ENCODE measurements at regions of chr11 and their contacts with region 1.

Region 1: DNA sequence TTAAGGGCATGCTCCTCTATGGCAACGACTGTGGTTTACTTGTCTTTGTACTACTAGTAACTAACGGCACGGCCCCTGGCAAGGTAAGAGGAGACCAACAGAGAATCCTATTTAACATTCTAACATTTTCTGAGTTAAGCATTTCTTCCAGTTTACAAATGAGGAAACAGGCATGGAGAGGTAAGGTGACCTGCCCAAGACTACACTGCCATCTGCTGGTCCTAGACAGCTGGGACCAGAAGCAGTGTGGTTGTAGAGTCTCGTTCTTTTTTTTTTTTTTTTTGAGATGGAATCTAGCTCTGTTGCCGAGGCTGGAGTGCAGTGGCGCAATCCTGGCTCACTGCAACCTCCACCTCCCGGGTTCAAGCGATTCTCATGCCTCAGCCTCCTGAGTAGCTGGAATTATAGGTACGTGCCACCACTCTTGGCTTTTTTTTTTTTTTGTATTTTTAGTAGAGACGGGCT is 5.3 kb upstream of the RAPSN start:
- DNase-seq: peak; percentile 85
- H3K4me3 Mint-ChIP-seq: no peak overlapping the region
- H3K27ac Mint-ChIP-seq: no peak overlapping the region
- H3K4me1 Mint-ChIP-seq: no peaks in the 10 kb centered on the region
- H3K27me3 Mint-ChIP-seq: no peaks in the 10 kb centered on the region
- CTCF ChIP-seq: peak; percentile 74

Region 2: DNA sequence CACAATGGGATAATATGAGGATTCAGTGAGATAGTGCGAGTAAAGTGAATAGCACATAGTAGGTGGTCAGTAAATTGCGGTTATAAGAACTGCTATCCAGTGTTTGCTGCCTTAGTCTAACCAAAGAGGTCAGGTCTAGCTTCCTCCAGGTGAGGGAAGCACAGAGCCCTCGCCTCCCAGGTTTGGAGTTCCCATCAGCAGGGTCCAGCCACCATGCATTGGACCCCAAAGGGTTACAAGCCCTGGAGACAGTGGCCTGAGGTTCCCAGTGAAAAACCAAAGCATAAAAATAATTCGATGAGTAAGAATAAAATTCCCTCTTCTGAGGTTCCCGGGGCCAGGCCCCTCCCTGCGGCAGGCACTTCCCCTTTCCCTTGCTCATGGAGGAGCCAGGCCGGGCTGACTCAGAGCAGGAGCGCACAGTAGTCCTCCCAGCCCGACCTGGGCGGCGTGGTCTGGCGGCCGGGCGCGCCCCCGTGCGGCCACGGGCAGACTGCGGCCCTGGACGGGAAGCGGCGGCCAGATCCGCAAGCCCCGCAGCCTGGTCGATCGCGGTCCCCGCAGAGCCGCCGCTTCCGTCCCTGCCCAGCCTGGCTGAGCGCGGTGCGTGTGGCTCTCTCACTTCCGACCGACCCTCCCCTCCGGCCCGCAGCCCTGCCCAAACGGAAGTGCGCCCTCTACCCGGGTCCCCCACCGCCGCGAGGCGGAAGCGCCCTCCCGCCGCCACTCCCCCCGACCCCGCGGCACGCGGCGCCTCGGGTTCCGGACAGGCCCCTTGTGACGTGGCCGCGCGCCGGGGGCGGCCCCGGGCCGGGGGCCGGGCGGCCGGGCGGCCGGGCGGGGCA is 46.2 kb before region 1 on chr11 and contains the start of gene SLC39A13:
- CTCF ChIA-PET with region 1: interaction called, 6 read pairs
- POLR2A ChIA-PET with region 1: interaction called, 6 read pairs
- intact Hi-C with region 1: loop called (anchors 2 kb)
- DNase-seq: peak; percentile 91
- H3K4me3 Mint-ChIP-seq: peak within 1 kb of the TSS; percentile 93
- H3K27ac Mint-ChIP-seq: peak within 1 kb of the TSS; percentile 98
- H3K4me1 Mint-ChIP-seq: peaks cover 24% of the 10 kb centered on the region
- H3K27me3 Mint-ChIP-seq: no peaks in the 10 kb centered on the region
- CTCF ChIP-seq: peak; percentile 79
- total RNA-seq, gene SLC39A13: 56.2 and 56.5 TPM in 2 replicates